ENCODE measurements at regions of chr3 and their contacts with region 1.

Region 1: DNA sequence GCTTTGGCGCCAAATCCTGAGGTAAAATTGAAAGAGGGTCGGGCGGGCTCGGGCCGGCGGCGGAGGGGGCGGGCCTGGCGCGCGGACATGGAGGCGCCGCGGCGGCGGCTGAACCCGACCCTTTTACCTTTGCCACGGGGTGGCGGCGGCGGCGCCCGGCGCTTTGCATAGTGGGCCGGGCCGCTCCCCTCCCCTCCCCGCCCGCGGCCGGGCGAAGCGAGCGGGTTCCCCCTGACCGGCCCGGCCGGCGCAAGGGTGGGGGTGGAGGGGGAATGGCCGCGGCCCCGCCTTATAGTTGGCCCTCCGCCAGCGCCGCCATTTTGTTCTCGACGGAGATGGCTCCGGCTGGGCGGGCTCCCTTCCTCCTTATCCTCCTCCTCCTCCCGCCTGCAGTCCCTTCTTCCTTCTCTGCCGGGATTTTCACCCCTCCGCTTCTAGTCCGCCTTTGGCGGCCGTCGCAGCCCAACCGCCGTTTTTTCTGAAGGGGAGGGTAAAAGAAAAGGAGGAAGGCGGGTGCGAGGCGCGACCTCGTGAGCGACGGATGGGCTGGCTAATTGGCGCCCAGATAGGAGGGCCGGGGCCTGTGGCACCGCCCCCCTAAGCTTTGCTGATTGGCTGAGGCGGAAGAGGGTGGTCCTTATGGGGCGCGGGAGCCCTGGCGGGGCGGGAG is 638 bp downstream of the NR2C2 start:
- DNase-seq: peak; percentile 80 to 97
- H3K4me3 ChIP-seq: peak overlapping the region; percentile 85 to 96
- H3K27ac ChIP-seq: peak overlapping the region; percentile 97 to 98
- H3K4me1 ChIP-seq: peaks cover 0 to 24% of the 10 kb centered on the region in 2 donors
- H3K27me3 ChIP-seq: no peaks in the 10 kb centered on the region
- CTCF ChIP-seq: no peak

Region 2: DNA sequence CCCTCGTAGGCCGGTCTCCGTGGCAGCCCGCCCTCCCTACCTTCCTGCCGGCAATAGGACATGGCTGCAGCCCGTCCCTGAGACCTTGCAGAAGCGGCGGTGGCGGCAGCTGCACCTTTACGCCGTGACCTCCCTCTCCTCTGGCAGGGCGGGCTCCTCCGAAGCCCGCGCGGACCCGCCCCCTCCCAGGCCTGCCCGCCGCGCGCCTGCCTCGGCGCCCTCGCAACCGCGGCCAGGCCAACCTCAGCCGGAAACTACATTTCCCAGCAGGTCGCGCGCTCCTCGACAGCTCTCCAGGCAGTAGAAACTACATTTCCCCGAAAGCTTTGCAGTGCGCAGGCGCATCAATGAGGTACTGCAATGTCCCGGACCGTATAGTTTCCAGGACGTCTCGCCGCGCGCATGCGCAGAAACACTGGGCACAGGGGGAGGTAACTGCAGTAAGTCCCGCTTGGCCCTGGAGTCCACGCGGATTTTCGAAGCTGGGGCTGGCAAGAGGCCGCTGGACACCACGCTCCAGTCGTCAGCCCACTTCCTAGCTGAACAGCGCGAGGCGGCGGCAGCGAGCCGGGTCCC is 823.3 kb before region 1 on chr3 and contains the starts of genes CHCHD4 and TMEM43:
- intact Hi-C with region 1: loop called (anchors 2 kb)
- DNase-seq: peak; percentile 98 to 100
- H3K4me3 ChIP-seq: peak within 1 kb of the TSS; percentile 84 to 100
- H3K27ac ChIP-seq: peak within 1 kb of the TSS; percentile 96 to 98
- H3K4me1 ChIP-seq: peaks cover 19 to 26% of the 10 kb centered on the region in 2 donors
- H3K27me3 ChIP-seq: no peaks in the 10 kb centered on the region
- CTCF ChIP-seq: peak in 1 of 3 experiments; percentile 2
- total RNA-seq, gene CHCHD4: 1.9 TPM
- total RNA-seq, gene TMEM43: 166 TPM

Region 3: DNA sequence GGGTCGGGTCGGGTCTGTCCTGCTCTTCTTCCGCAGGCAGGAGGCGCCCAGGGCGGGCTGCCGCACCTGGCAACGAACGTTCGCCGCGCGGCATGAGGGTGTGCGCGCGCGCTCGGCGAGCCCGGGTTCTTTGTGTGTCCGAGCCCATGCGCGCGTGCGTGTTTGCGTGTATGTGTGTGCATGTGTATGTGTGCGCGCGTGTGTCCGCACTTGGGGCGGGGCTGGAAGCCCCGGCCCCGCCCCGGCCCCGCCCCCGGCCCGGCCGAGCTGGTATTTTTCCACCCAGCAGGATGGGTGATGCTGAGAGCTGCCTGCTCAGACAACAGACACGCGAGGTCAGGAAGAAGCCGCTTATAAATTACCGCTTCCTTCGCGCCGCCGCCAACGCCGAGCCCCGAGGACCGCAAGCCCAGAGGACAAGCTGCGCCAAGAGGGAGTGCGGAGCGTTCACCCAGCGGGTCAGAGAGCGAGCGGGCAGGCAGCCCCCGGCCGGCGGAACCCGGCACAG is 545.7 kb before region 1 on chr3 and contains the start of gene SLC6A6:
- intact Hi-C with region 1: loop called (anchors 5 kb)
- DNase-seq: peak; percentile 88 to 98
- H3K4me3 ChIP-seq: peak within 1 kb of the TSS; percentile 62 to 85
- H3K27ac ChIP-seq: peak within 1 kb of the TSS; percentile 77 to 85
- H3K4me1 ChIP-seq: peaks cover 25 to 33% of the 10 kb centered on the region in 2 donors
- H3K27me3 ChIP-seq: no peaks in the 10 kb centered on the region
- CTCF ChIP-seq: peak in 2 of 3 experiments; percentile 39 to 52
- total RNA-seq, gene SLC6A6: 78.1 TPM

Region 4: GRCh38 chr3:15064835-15065549 is 117.0 kb after region 1 on chr3 and contains the start of gene MRPS25:
- intact Hi-C with region 1: loop called (anchors 10 kb)
- DNase-seq: peak; percentile 62 to 95
- H3K4me3 ChIP-seq: peak within 1 kb of the TSS; percentile 69 to 95
- H3K27ac ChIP-seq: peak within 1 kb of the TSS; percentile 69 to 71
- H3K4me1 ChIP-seq: peaks cover 0 to 5% of the 10 kb centered on the region in 2 donors
- H3K27me3 ChIP-seq: no peaks in the 10 kb centered on the region
- CTCF ChIP-seq: no peak
- total RNA-seq, gene MRPS25: 8.1 TPM

Region 5: DNA sequence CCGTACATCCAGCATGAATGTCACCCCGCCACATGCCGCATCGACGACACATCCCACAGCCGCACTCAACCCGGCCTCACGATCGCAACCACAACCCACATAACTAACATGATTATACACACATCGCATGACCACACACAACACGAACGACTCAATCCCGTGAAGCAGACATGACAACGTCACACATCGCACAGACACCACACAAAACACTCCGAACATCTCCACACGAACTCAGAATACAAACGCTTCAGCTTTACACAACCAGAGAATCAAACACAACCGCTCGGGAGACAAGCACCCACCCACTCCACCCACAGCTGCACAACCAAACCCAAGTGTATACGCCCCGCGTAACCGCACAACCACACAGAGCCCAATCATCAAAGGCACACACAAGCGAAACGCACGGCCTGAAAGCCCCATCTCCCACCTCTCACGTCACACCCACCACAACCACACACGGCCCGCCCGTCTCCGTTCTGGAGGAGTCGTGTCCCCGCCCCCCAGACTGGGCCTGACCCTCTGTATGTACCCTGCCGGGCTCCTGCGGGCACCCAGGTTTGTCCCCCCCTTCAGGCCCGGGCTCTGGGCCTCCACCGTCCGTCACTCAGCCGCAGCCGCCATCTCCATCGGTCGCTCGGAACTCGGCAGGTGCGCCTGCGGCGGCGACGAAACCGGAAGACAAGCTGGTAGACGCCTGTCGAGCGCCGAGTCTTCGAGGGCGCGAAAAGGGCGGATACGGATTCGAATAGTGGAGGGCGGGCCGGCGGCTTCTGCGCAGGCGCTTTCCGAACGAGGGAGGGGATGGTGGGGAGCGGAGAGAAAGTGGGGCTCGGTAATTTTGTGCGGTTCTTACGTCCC is 150.7 kb after region 1 on chr3 and contains the start of gene RBSN:
- intact Hi-C with region 1: loop called (anchors 2 kb)
- DNase-seq: peak; percentile 85 to 96
- H3K4me3 ChIP-seq: peak within 1 kb of the TSS; percentile 88 to 93
- H3K27ac ChIP-seq: peak within 1 kb of the TSS; percentile 91
- H3K4me1 ChIP-seq: peaks cover 0 to 47% of the 10 kb centered on the region in 2 donors
- H3K27me3 ChIP-seq: no peaks in the 10 kb centered on the region
- CTCF ChIP-seq: no peak
- total RNA-seq, gene RBSN: 17.2 TPM

Region 6: DNA sequence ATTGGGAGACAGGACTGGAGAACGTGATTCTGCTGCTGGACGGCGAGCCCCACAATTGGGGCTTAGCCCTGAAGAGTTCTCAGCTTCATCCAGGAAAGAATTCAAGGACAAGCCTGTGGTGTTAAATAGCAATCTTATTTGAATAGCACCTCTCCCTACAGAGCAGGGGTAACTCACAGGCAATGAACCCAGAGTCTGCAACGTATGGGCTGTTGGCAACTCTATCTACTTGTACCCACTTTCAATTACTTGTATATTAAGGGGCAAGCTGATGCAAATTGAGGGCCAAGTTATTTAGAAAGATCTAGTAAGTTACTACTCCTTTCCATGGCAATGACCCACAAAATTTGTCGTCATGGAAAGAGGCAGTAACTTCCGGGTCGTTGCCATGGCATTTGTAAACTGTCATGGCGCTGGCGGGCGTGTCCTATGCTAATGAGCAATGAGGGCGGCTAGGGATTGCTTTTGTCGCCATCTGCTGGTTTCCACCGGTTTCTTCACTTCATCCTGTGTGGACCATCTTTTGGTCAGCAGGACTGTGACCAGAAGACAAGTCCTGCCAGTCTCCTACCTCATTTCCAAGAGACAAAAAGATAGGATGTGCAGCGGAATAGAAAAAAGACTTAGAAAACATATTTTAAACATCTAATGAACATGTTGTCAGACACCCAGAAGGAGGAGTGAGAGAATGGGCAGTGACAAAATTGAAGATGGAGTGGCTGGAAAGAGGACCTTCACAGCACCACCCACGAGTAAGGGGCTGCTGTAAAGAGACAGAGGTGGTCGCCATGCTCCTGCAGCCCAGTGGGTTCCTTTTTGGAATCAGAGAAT is 430.2 kb after region 1 on chr3:
- intact Hi-C with region 1: loop called (anchors 5 kb)
- DNase-seq: peak; percentile 89 to 98
- H3K4me3 ChIP-seq: no peak overlapping the region
- H3K27ac ChIP-seq: peak overlapping the region; percentile 61 to 66
- H3K4me1 ChIP-seq: peaks cover 0 to 2% of the 10 kb centered on the region in 2 donors
- H3K27me3 ChIP-seq: no peaks in the 10 kb centered on the region
- CTCF ChIP-seq: peak; percentile 81 to 96 (median 85)

Measured in ascending aorta (tissue), 2 donors.